ENCODE measurements at regions of chr11 and their contacts with region 1.

Region 1: DNA sequence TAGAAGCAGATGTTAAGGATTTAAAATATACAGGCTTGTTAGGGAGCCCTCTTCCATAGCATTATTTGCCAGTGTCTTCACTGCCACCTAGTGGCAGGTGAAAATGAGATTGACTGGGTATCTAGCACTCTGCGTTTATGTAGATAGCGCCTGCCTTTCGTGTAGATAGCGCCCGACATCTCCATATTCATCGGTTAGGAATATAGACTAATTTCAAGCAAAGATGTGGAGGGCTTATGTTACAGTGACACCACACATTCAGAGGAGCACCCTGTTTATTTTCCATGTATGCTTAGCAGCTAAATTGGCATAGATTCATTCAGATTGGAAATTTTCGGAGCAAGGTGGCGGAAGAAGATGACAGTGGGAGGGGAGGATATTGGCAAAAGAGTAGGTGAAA is 72.0 kb downstream of the SLC5A12 start:
- DNase-seq: peak; percentile 84
- H3K4me3 Mint-ChIP-seq: no peak overlapping the region
- H3K27ac Mint-ChIP-seq: no peak overlapping the region
- H3K4me1 Mint-ChIP-seq: no peaks in the 10 kb centered on the region
- H3K27me3 Mint-ChIP-seq: peaks cover 11% of the 10 kb centered on the region
- CTCF ChIP-seq: peak; percentile 69

Region 2: GRCh38 chr11:26522912-26523610 is 126.8 kb before region 1 on chr11:
- CTCF ChIA-PET with region 1: interaction called, 8 read pairs
- POLR2A ChIA-PET with region 1: interaction called, 3 read pairs
- intact Hi-C with region 1: loop called (anchors 1 kb)
- DNase-seq: peak; percentile 47
- H3K4me3 Mint-ChIP-seq: no peak overlapping the region
- H3K27ac Mint-ChIP-seq: no peak overlapping the region
- H3K4me1 Mint-ChIP-seq: no peaks in the 10 kb centered on the region
- H3K27me3 Mint-ChIP-seq: peaks cover 56% of the 10 kb centered on the region
- CTCF ChIP-seq: peak; percentile 33

Region 3: DNA sequence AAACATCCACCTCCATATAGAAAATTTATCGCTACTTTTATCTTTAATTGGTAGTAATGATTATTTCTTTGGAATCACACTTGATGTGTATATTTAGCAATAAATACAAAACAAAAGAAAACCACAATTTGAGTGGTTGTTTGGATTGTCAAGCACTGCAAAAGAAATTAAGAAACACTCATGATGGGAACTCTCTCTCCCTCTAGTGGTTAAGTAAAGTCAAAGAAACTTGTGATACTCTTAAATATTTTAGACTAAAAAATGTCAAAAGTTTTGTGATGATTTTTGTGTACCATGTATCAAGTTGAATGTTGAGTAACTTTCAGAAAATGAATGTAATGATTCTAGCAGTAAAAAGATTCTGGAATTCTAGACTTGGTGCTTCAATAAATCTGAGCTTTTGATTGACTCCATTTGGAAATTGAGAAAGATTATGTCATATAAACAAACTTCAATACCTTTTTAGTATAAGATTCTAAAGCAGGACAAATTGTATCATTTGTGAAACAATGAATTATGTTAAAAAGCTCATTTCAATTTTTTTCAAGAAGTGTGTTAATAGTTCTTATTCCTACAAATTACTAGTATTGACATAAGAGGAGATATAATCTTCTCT is 98.6 kb before region 1 on chr11:
- CTCF ChIA-PET with region 1: interaction called, 5 read pairs
- POLR2A ChIA-PET with region 1: no interaction called
- intact Hi-C with region 1: loop called (anchors 1 kb)
- DNase-seq: no peak
- H3K4me3 Mint-ChIP-seq: no peak overlapping the region
- H3K27ac Mint-ChIP-seq: no peak overlapping the region
- H3K4me1 Mint-ChIP-seq: no peaks in the 10 kb centered on the region
- H3K27me3 Mint-ChIP-seq: peaks cover 28% of the 10 kb centered on the region
- CTCF ChIP-seq: peak; percentile 24

Measured in MCF 10A (cell line).